Panc1 (cell line): ENCODE measurements at regions of chr10 and their contacts with region 1.

Region 1: DNA sequence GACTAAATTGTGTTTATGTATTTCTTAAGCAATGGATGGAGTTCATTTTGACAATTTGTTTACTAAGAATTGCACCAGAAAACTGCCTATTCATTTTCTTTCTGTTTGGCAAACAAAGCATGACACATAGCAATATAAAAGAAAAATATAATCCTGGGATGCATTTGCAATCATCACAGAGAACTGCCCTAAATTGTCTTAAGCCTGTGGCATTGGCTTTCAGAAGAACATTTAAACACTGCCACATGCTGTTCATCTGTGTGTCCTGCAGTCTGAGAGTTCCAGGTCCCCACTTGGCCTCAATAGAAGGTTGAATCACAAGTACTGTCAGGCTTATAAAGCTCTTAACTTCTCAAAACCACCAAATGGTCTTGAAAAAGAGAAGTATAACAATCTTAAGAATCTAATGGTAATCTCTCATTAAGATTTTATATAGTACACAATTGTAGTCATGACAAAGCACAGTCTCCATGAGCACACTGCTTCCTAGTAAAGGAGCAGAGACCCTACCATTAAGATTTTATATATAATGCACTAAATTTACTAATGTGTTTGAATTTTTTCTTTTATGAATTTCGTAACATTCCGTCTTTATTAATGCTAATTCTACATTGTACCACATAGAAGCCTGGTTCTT is 29.9 kb downstream of the RNLS start:
- DNase-seq: peak; percentile 60
- ATAC-seq: peak; percentile 99
- H3K4me3 ChIP-seq: no peak overlapping the region
- H3K27ac ChIP-seq: no peak overlapping the region
- H3K4me1 ChIP-seq: peaks cover 4% of the 10 kb centered on the region; the same call in 1 of the 2 replicates
- H3K27me3 ChIP-seq: no peaks in the 10 kb centered on the region
- CTCF ChIP-seq: peak; percentile 86

Region 2: GRCh38 chr10:87850742-87851205 is 702.5 kb before region 1 on chr10:
- CTCF ChIA-PET with region 1: interaction called, 8 read pairs
- POLR2A ChIA-PET with region 1: no interaction called
- in situ Hi-C with region 1: no loop called
- intact Hi-C with region 1: loop called (anchors 2 kb)
- DNase-seq: no peak
- ATAC-seq: peak; percentile 95
- H3K4me3 ChIP-seq: no peak overlapping the region
- H3K27ac ChIP-seq: peak overlapping the region; percentile 35; the same call in 1 of the 2 replicates
- H3K4me1 ChIP-seq: peaks cover 13% of the 10 kb centered on the region
- H3K27me3 ChIP-seq: no peaks in the 10 kb centered on the region
- CTCF ChIP-seq: peak; percentile 89

Region 3: GRCh38 chr10:88216976-88217375 is 336.3 kb before region 1 on chr10:
- CTCF ChIA-PET with region 1: no interaction called
- POLR2A ChIA-PET with region 1: no interaction called
- in situ Hi-C with region 1: no loop called
- intact Hi-C with region 1: no loop called
- DNase-seq: no peak
- ATAC-seq: no peak
- H3K4me3 ChIP-seq: no peak overlapping the region
- H3K27ac ChIP-seq: no peak overlapping the region
- H3K4me1 ChIP-seq: peaks cover 3% of the 10 kb centered on the region; the same call in 1 of the 2 replicates
- H3K27me3 ChIP-seq: peaks cover 5% of the 10 kb centered on the region
- CTCF ChIP-seq: no peak

Region 4: GRCh38 chr10:88386821-88387773 is 166.1 kb before region 1 on chr10:
- CTCF ChIA-PET with region 1: no interaction called
- POLR2A ChIA-PET with region 1: no interaction called
- in situ Hi-C with region 1: no loop called
- intact Hi-C with region 1: loop called (anchors 5 kb)
- DNase-seq: no peak
- ATAC-seq: no peak
- H3K4me3 ChIP-seq: no peak overlapping the region
- H3K27ac ChIP-seq: no peak overlapping the region; the same call in 1 of the 2 replicates
- H3K4me1 ChIP-seq: peaks cover 11% of the 10 kb centered on the region
- H3K27me3 ChIP-seq: no peaks in the 10 kb centered on the region; the same call in 1 of the 2 replicates
- CTCF ChIP-seq: no peak

Region 5: GRCh38 chr10:88473989-88474883 is 79.0 kb before region 1 on chr10:
- CTCF ChIA-PET with region 1: no interaction called
- POLR2A ChIA-PET with region 1: no interaction called
- in situ Hi-C with region 1: no loop called
- intact Hi-C with region 1: loop called (anchors 5 kb)
- DNase-seq: no peak
- ATAC-seq: no peak
- H3K4me3 ChIP-seq: no peak overlapping the region
- H3K27ac ChIP-seq: no peak overlapping the region
- H3K4me1 ChIP-seq: no peaks in the 10 kb centered on the region
- H3K27me3 ChIP-seq: no peaks in the 10 kb centered on the region
- CTCF ChIP-seq: no peak